ENCODE measurements at regions of chr6 and their contacts with region 1.

Region 1: GRCh38 chr6:56902641-56903464 is 52.1 kb upstream of the BEND6 start:
- DNase-seq: no peak
- H3K4me3 Mint-ChIP-seq: no peak overlapping the region
- H3K27ac Mint-ChIP-seq: no peak overlapping the region
- H3K4me1 Mint-ChIP-seq: peaks cover 5% of the 10 kb centered on the region
- H3K27me3 Mint-ChIP-seq: peaks cover 15% of the 10 kb centered on the region

Region 2: GRCh38 chr6:55913213-55914195 is 989.3 kb before region 1 on chr6:
- intact Hi-C with region 1: no loop called
- DNase-seq: no peak
- H3K4me3 Mint-ChIP-seq: no peak overlapping the region
- H3K27ac Mint-ChIP-seq: no peak overlapping the region
- H3K4me1 Mint-ChIP-seq: no peaks in the 10 kb centered on the region
- H3K27me3 Mint-ChIP-seq: no peaks in the 10 kb centered on the region

Region 3: GRCh38 chr6:56890683-56891429 is 12.0 kb before region 1 on chr6:
- intact Hi-C with region 1: loop called (anchors 2 kb)
- DNase-seq: peak; percentile 5
- H3K4me3 Mint-ChIP-seq: no peak overlapping the region
- H3K27ac Mint-ChIP-seq: peak overlapping the region; percentile 53
- H3K4me1 Mint-ChIP-seq: peaks cover 35% of the 10 kb centered on the region
- H3K27me3 Mint-ChIP-seq: no peaks in the 10 kb centered on the region

Region 4: DNA sequence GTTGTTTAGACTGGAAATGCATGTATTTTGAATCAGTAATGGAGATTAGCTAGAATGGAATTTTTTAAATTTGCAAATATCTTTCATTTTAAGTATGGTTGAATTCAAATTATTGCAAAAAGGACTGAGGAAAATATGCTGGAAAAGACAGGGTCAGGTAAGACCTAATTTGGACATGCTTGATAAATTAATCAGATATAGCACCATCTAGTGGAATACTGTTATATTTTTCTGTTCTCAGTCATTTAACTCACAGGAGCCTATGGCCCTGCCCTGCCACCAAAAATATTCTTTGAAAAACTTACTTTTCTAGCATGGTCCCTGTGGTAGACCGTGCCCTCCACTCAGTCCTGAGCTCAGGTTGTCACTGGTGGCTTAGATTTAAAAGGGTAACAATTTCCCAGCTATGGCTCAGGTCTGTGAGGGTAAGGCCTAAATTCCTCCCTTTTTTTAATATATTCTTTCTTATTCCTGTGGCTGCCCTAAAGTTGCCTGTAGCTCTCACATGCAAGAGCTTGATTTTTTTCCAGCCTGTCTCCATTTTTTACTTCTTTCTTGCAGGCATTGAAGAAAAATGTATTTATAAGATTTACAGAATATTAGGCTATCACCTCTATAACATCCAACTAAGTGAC is 118.3 kb after region 1 on chr6:
- intact Hi-C with region 1: loop called (anchors 1 kb)
- DNase-seq: no peak
- H3K4me3 Mint-ChIP-seq: no peak overlapping the region
- H3K27ac Mint-ChIP-seq: no peak overlapping the region
- H3K4me1 Mint-ChIP-seq: no peaks in the 10 kb centered on the region
- H3K27me3 Mint-ChIP-seq: peaks cover 14% of the 10 kb centered on the region

Region 5: DNA sequence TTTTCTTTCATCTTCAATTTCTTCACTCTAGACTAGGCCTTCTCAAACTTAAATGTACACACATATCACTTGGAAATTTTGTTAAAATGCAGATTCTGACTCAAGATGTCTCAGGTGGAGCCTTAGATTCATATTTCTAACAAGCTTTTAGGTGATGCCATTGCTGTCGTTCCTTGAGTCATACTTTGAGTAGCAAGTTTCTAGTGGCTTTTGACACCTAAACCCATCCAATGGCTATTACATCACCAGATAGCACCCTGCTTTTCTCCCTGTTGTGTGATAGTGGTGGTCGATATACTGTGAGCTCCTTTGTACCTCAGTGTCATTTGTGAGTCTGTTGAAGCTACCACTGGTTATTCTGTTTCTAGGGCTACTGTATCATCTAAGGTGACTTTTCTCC is 234.5 kb after region 1 on chr6:
- intact Hi-C with region 1: no loop called
- DNase-seq: no peak
- H3K4me3 Mint-ChIP-seq: no peak overlapping the region
- H3K27ac Mint-ChIP-seq: no peak overlapping the region
- H3K4me1 Mint-ChIP-seq: peaks cover 19% of the 10 kb centered on the region
- H3K27me3 Mint-ChIP-seq: no peaks in the 10 kb centered on the region

Region 6: DNA sequence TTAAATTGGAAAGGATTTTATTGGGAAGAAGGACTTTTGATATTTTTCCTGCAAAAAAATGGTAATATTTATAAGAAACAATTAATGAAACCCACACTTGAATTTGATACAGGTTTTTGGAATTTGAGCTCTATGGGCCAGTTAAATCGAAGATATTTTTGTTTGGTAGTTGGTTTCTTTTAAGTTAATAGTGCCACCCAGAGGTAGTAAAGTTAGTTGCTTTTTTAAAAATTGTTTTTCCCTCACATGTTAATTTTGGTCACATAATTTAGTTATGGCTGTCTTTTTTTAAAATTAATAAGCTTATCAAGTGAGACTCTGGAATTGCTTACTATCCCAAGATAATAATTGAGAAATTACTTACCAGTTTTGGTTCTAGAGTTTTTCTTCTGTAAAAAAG is 421.7 kb after region 1 on chr6:
- intact Hi-C with region 1: loop called (anchors 1 kb)
- DNase-seq: no peak
- H3K4me3 Mint-ChIP-seq: no peak overlapping the region
- H3K27ac Mint-ChIP-seq: no peak overlapping the region
- H3K4me1 Mint-ChIP-seq: peaks cover 26% of the 10 kb centered on the region
- H3K27me3 Mint-ChIP-seq: no peaks in the 10 kb centered on the region